ENCODE measurements at regions of chr16 and their contacts with region 1.

Region 1: GRCh38 chr16:29973384-29974246 is at the start of gene TAOK2:
- DNase-seq: peak; percentile 99
- total RNA-seq, gene TAOK2: 38.9 TPM

Region 2: GRCh38 chr16:29815793-29816693 is 157.6 kb before region 1 on chr16 and contains the start of gene PAGR1:
- intact Hi-C with region 1: loop called (anchors 5 kb)
- DNase-seq: peak; percentile 99
- total RNA-seq, gene PAGR1: 15.6 TPM

Region 3: GRCh38 chr16:29862884-29863668 is 110.5 kb before region 1 on chr16 and contains the start of gene CDIPT:
- intact Hi-C with region 1: no loop called
- DNase-seq: peak; percentile 97
- total RNA-seq, gene CDIPT: 73.8 TPM

Region 4: GRCh38 chr16:29961479-29962343 is 11.9 kb before region 1 on chr16 and contains the start of gene TMEM219:
- intact Hi-C with region 1: loop called (anchors 1 kb)
- DNase-seq: peak; percentile 95
- total RNA-seq, gene TMEM219: 66.4 TPM

Region 5: GRCh38 chr16:29995911-29996772 is 22.5 kb after region 1 on chr16 and contains the start of gene INO80E:
- intact Hi-C with region 1: loop called (anchors 1 kb)
- DNase-seq: peak; percentile 100
- total RNA-seq, gene INO80E: 36.8 TPM

Region 6: DNA sequence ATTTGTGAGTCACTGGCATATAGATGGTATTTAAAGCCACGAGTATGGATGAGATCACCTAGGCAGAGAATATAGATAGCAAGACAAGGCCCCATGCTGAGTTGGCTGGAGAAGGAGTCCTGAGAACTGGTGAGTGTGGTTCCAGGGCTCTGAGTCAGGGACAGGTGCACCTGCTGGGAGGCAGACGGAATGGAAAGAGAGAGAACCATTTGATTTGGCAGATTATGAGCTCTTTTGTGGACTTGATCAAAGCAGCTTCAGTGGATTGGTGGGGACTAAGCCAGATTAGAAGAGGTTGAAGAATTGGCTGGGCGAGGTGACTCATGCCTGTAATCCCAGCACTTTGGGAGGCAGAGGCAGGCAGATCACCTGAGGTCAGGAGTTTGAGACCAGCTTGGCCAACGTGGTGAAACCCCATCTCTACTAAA is 45.1 kb after region 1 on chr16:
- intact Hi-C with region 1: no loop called
- DNase-seq: no peak